PC-3 (cell line): ENCODE measurements at regions of chr7 and their contacts with region 1.

Region 1: GRCh38 chr7:8908893-8909292 is 475.5 kb downstream of the NXPH1 start:
- DNase-seq: no peak
- ATAC-seq: no peak
- H3K4me3 ChIP-seq: no peak overlapping the region
- H3K27ac ChIP-seq: no peak overlapping the region
- H3K4me1 ChIP-seq: no peaks in the 10 kb centered on the region
- H3K27me3 ChIP-seq: no peaks in the 10 kb centered on the region
- CTCF ChIP-seq: no peak

Region 2: GRCh38 chr7:8785077-8785476 is 123.8 kb before region 1 on chr7:
- CTCF ChIA-PET with region 1: no interaction called
- POLR2A ChIA-PET with region 1: no interaction called
- intact Hi-C with region 1: no loop called
- DNase-seq: no peak
- ATAC-seq: no peak
- H3K4me3 ChIP-seq: no peak overlapping the region
- H3K27ac ChIP-seq: no peak overlapping the region
- H3K4me1 ChIP-seq: no peaks in the 10 kb centered on the region
- H3K27me3 ChIP-seq: no peaks in the 10 kb centered on the region
- CTCF ChIP-seq: no peak

Region 3: GRCh38 chr7:8963722-8964121 is 54.8 kb after region 1 on chr7:
- CTCF ChIA-PET with region 1: no interaction called
- POLR2A ChIA-PET with region 1: no interaction called
- intact Hi-C with region 1: loop called (anchors 5 kb)
- DNase-seq: no peak
- ATAC-seq: no peak
- H3K4me3 ChIP-seq: no peak overlapping the region
- H3K27ac ChIP-seq: no peak overlapping the region
- H3K4me1 ChIP-seq: no peaks in the 10 kb centered on the region
- H3K27me3 ChIP-seq: no peaks in the 10 kb centered on the region
- CTCF ChIP-seq: no peak

Region 4: GRCh38 chr7:9083829-9084228 is 174.9 kb after region 1 on chr7:
- CTCF ChIA-PET with region 1: no interaction called
- POLR2A ChIA-PET with region 1: no interaction called
- intact Hi-C with region 1: loop called (anchors 10 kb)
- DNase-seq: peak; percentile 48
- ATAC-seq: peak; percentile 99
- H3K4me3 ChIP-seq: no peak overlapping the region
- H3K27ac ChIP-seq: no peak overlapping the region
- H3K4me1 ChIP-seq: no peaks in the 10 kb centered on the region
- H3K27me3 ChIP-seq: no peaks in the 10 kb centered on the region
- CTCF ChIP-seq: no peak